HEK293 (cell line): ENCODE measurements at regions of chr11 and their contacts with region 1.

Region 1: DNA sequence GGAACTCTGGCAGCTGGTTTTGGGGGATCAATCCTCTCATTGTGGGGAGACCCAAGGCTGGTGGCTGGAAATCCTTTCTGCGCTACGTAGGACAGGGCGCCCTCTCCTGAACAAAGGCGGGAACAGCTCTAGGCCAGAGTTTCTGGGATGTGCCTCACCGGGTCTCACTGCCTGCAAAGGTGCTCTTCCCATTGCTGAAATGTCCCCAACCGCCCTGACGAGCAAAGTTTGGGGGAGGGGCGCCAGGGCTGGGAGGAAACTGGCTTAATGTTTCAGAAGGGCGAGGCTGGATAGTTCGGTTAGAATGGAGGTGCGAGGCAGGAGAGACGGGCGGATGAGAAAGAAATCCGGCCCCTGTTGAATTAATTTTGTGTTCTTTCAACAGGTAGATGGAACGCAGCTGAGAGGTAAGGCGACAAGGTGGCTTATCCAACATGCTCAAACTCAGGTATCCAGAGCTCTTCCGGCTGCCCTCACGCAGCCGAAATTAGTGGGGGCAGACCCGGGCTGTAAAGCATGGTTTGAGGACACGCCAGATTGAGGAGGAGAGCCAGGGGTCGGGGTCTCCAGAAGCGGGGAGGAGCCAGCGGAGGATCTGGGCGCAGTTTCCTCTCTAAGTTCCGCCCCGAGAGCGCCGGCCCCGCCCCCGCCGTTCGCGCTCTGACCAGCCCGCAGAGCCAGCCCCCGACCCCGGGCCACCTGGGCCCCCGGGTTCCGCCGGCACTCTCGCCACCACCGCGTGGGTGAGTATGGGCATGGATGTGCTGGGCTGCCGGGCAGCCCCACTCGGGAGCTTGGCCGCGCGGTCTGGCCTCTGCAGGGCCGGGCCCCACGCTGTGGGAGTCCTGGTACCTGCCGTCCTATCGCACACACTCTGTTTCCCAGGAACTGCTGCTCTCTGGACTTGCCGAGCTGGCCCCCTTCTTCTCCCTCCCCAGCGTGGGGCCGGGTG is at the start of gene PGAP2:
- H3K4me3 ChIP-seq: peak within 1 kb of the TSS; percentile 79
- H3K27ac ChIP-seq: peak within 1 kb of the TSS; percentile 25; the same call in 1 of the 2 replicates
- H3K4me1 ChIP-seq: no peaks in the 10 kb centered on the region
- CTCF ChIP-seq: peak; percentile 54

Region 2: DNA sequence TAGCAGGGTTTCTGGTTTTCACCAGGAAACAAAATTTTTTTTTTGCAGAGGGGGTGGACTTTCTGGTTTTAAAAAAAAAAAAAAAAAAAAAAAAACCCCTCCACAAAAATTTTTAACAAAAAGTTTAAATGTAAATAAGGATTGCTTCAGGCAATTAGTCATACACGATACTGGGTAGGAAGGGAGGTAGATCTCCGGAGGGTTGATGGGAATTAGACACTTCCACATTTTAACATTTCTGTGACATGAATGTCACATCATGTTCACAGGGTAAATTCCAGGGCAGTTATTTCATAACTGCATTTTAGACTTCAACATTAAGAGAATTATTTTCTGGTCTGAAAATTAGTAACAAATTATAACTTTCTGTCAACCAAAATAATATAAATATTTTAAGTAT is 26.8 kb before region 1 on chr11:
- CTCF ChIA-PET with region 1: interaction called, 10 read pairs
- POLR2A ChIA-PET with region 1: no interaction called
- H3K4me3 ChIP-seq: no peak overlapping the region
- H3K27ac ChIP-seq: no peak overlapping the region
- H3K4me1 ChIP-seq: no peaks in the 10 kb centered on the region; the same call in 1 of the 2 replicates
- CTCF ChIP-seq: no peak

Region 3: DNA sequence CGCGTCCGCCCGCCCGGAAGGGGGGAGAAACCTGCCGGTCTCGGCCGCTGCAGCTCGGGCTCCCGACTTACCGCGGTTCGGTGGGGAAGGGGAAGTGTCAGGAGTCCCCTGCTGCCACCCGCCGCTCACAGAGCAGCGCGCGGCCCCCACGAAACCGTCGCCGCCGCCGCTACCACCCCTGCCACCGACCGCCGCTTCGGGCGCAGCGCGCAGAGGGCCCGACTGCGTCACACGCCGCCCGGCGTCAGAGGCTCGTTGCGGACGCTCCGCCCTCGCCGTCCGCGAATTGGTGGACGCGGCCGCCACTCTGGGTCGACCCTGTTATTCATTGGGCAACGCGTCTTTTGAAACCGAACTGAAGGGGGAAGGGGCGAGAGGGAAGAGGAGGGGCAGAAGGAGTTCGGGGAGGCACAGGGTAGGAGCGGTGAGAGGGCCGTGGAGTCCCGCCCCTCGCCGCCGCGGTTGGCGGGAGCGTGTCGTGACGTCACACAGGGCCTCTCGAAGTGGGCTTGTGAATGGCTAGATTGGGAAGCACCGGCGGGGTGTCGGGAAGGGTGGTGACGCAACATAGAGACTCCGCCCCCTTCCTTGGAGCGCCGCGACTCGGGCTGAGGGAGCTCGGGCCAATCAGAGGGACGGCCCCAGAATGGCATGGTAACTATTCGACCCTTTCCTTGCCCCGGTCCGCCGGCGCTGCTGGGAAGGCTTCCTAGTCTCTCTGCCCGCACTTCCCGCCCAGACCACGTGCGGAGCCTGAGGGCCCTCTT is 10.7 kb before region 1 on chr11 and contains the start of gene NUP98:
- CTCF ChIA-PET with region 1: interaction called, 28 read pairs
- POLR2A ChIA-PET with region 1: interaction called, 26 read pairs
- H3K4me3 ChIP-seq: peak within 1 kb of the TSS; percentile 68
- H3K27ac ChIP-seq: peak within 1 kb of the TSS; percentile 72
- H3K4me1 ChIP-seq: no peaks in the 10 kb centered on the region
- CTCF ChIP-seq: peak; percentile 50

Region 4: DNA sequence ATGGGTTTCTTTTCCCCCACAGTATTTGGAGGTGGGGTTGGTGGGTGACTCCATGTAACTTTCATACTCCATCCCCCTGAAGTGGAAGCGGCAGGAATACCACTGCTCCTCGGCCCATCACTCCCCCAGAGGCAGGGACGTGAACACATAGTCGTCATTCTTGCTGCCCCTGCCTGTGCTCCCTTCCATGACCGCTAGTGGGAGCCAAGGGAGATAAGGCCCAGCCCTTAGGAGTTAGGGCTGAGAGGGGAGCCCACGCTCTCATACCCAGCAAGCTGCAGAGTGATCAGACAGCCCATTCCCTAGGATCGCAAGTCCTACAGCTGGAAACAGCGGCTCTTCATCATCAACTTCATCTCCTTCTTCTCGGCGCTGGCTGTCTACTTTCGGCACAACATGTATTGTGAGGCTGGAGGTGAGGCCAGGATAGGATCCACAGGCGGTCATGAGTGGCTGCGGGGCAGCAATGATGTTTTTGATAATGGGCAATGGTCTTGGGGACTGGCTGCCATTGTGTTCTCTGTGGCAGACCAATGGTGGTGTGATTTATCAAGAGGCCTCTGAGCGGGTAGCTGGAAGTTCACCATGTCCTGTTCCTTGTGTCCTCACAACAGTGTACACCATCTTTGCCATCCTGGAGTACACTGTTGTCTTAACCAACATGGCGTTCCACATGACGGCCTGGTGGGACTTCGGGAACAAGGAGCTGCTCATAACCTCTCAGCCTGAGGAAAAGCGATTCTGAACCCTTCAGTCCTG is 16.7 kb after region 1 on chr11:
- CTCF ChIA-PET with region 1: interaction called, 19 read pairs
- POLR2A ChIA-PET with region 1: interaction called, 4 read pairs
- H3K4me3 ChIP-seq: no peak overlapping the region
- H3K27ac ChIP-seq: no peak overlapping the region
- H3K4me1 ChIP-seq: no peaks in the 10 kb centered on the region
- CTCF ChIP-seq: peak; percentile 85

Region 5: GRCh38 chr11:3841426-3842350 is 33.5 kb after region 1 on chr11:
- CTCF ChIA-PET with region 1: interaction called, 7 read pairs
- POLR2A ChIA-PET with region 1: interaction called, 13 read pairs
- H3K4me3 ChIP-seq: peak overlapping the region; percentile 67
- H3K27ac ChIP-seq: 0 out of 2 replicates have a peak overlapping the region, but pooled peaks have one; percentile 19
- H3K4me1 ChIP-seq: no peaks in the 10 kb centered on the region
- CTCF ChIP-seq: peak; percentile 82